Cardiac septum (tissue), 1 donor: ENCODE measurements at regions of chr3 and their contacts with region 1.

Region 1: GRCh38 chr3:132722164-132723024 is at the start of gene NPHP3:
- DNase-seq: peak; percentile 99
- total RNA-seq, gene NPHP3: 13.6 TPM

Region 2: GRCh38 chr3:132569153-132569552 is 153.2 kb before region 1 on chr3:
- intact Hi-C with region 1: no loop called
- DNase-seq: no peak

Region 3: GRCh38 chr3:132659365-132660051 is 62.9 kb before region 1 on chr3 and contains the start of gene ACAD11:
- intact Hi-C with region 1: loop called (anchors 2 kb)
- DNase-seq: peak; percentile 87
- total RNA-seq, gene ACAD11: 26.2 TPM

Region 4: DNA sequence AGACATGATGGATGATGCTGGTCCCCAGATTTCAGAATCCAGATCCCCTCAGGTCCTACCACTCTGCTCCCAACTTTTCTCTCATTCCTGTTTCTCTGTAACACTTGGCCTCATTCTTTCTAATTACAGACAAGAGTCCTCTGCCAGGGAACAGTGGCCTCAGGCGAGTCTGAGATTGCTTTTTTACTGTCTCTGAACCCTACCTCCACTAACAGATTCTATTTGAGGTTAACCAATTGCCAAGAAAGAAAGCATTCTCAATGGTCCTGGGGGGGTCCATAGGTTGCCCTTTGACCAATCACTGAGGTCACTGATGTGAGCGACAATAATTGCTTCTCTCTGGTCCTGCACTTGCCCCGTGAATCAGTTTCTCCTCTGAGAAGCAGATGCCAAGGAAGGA is 170.6 kb after region 1 on chr3:
- intact Hi-C with region 1: no loop called
- DNase-seq: no peak

Region 5: GRCh38 chr3:133040696-133041523 is 318.5 kb after region 1 on chr3:
- intact Hi-C with region 1: loop called (anchors 5 kb)
- DNase-seq: no peak

Region 6: DNA sequence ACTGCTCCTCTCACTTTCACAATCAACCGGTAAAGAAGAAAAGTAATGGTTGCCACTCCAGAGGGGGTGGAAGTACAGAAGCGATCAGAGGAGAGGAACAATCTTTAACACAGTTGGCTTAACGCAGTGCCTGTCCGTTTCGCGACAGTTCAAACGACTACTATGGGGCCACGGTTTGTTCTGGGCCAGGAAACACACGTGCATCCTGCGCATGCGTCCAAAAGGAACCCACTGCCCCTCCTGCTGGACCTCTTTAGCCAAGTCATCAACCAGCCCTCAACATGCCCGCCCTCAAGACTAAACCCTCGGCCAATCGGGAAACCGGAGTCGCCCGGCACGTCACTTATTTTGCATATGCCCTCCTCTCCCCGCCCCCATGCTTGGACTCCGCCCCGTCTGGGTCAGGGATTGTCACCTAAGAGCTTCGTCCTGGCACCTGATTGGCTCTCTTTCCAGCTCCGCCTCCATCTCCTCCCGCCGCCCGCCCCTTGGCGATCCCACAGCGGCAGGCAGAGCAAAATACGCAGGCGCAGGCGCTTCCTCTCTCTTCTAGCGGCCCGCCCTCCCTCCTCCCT is 850.7 kb after region 1 on chr3:
- intact Hi-C with region 1: loop called (anchors 5 kb)
- DNase-seq: peak; percentile 100

Region 7: GRCh38 chr3:133805527-133806475 is 1083.4 kb after region 1 on chr3 and contains the start of gene SRPRB:
- intact Hi-C with region 1: loop called (anchors 10 kb)
- DNase-seq: peak; percentile 97
- total RNA-seq, gene SRPRB: 27.6 TPM